ENCODE measurements at regions of chr10 and their contacts with region 1.

Region 1: DNA sequence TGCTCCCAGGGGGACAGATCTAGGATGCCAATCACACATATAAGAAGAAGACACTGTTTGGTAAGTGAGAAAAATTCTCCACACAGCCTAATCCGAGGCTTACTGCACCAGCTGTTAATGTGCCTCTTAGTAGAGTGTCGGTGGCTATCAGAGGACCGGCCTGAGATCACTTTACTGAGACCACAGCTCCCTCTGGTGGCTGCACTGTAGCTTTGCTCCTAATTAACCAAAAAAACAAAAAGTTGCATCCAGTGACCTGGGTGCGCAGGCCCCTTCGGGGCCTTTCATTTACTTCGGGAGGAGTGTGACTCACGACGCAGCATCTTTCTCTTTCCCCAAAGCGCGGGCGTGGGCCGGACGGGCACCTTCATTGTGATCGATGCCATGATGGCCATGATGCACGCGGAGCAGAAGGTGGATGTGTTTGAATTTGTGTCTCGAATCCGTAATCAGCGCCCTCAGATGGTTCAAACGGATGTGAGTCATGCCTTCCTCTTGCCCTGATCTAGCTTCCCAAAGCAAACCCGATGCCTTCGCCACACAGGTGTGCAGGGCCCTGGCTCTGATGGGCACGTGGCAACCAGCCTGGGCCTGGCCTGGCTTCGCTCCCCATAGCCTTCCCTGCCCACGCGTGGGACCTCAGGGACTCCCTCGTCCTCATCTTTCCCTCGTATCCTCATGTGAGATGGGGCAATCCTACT is 56.7 kb downstream of the MKI67 start:
- DNase-seq: peak; percentile 83
- CTCF ChIP-seq: peak; percentile 78

Region 2: GRCh38 chr10:127485153-127485857 is 584.2 kb before region 1 on chr10:
- CTCF ChIA-PET with region 1: no interaction called
- POLR2A ChIA-PET with region 1: no interaction called
- DNase-seq: no peak
- CTCF ChIP-seq: no peak

Region 3: DNA sequence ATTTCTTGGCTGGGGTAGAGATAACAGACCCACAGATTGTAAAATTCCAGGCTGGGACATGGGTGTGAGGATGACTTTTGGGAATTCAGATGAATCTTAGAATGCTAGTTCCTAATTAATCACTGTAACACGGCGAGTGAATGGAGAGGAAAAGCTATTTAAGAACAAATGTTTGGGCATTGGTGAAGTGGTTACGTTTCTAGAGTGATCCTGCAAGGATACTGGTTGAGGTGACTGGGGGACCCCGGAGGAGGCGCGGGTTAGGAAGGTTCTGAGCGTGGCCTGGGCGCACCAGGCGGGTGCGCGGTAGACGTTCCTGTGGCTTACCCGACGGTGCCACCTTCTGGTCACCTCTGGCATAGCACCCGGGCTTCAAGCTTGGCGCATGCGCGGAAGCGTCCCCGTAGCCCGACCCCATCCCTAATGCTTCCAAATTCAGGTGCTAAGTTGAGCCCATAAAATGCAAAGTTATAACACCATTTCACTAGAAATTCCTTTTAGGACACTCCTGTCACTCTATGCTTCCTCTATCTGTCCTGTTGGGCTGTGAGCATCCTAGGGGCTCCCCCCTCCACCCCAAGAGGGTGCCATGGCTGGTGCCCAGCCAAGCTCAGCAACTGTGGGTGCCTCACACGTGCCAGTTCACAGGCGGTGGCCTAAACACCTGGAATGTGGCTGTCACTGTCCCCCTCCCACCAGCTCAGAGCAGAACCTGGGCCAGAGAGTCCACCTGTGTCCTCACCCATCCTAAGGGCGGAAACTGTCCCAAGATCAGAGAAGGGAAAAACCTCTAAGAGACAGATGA is 58.1 kb before region 1 on chr10:
- CTCF ChIA-PET with region 1: interaction called, 19 read pairs
- POLR2A ChIA-PET with region 1: no interaction called
- DNase-seq: peak; percentile 92
- CTCF ChIP-seq: peak; percentile 93

Region 4: DNA sequence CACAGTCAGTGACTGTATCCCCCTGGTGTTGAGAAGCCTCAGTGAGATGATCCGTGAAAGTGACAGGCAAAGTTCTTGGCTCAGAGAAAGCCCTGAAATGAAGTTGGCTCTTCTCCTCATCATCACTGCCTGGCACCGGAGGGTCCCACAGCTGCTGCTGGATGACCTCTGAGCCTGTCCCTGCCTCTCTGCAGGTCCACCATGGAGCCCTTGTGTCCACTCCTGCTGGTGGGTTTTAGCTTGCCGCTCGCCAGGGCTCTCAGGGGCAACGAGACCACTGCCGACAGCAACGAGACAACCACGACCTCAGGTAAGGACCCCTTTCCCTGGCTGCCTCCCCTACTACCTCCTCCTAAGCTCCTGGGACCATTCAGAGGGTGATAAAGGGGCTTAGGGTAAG is 28.8 kb before region 1 on chr10:
- CTCF ChIA-PET with region 1: interaction called, 335 read pairs
- POLR2A ChIA-PET with region 1: no interaction called
- DNase-seq: no peak
- CTCF ChIP-seq: no peak

Region 5: DNA sequence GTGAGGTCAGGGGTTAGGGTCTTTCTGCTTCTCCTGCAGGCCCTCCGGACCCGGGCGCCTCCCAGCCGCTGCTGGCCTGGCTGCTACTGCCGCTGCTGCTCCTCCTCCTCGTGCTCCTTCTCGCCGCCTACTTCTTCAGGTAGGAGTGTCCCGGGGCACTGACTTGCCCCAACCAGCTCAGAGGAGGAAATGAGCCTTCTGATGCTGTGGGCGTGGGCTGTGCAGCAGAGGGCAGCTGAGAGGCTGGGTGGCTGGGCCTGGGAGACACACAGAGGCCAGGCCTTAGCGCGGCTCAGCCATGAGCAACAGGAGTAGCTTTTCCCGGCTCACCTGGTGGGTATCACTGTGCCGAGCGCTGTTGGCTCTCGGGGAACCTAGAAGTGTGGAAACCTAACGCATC is 22.1 kb before region 1 on chr10:
- CTCF ChIA-PET with region 1: interaction called, 40 read pairs
- POLR2A ChIA-PET with region 1: no interaction called
- DNase-seq: peak; percentile 91
- CTCF ChIP-seq: no peak

Region 6: DNA sequence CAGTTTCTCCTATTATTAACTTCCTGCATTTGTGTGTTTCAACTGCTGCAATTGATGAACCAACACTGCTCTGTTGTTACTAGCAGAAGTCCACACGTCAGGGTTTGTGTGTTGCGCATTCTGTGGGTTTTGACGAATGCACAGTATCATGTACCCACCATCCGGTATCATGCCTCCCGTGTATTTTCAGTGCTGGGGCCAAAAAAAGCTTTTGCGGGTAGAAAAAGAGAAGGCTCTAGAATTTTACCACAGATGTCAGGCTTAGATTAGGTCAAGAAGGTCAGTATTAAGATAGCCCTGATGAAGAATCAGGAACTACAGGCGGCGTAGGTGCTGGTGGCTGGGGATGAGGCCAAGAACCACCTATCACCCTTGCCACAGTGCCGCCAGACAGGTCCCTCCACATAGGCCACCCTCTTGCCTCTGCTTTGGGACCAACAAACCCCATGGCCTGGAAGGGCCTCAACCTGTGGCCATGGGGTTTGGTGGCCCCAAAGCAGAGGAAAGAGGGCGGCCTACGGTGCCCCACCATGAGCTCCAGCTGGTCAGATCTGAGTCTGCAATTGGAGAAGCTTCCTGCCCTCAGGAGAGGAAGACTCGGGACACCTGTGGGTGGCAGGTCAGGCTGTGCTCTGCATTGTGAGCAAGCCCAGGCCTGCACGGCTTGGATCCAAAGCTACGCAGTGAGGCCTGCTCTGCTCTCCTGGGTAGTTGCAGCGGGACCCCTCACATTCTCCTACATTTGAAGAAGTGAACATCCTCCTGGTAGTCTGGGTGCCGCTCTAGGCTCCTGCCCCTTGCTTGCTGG is 15.1 kb before region 1 on chr10:
- CTCF ChIA-PET with region 1: interaction called, 40 read pairs
- POLR2A ChIA-PET with region 1: no interaction called
- DNase-seq: no peak
- CTCF ChIP-seq: no peak

Region 7: DNA sequence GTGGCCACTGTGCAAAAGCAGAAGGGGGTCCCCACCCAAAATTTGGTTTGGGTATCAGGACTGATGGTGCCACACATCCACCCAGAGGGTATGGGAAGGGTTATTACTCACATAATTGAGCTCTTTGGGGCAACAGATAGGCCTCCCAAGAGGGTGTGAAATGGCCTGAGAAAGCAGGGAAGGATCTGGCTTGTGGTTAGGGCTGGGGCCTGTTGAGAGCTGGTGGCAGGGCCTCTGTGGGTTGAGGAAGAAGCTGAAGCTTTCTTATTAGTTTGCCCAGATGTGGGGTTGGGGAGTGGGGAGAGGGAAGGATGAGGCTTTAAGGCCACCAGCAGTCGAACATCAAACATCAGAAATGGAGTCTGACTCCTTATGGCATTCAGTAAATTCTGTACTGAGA is 75.0 kb after region 1 on chr10:
- CTCF ChIA-PET with region 1: interaction called, 70 read pairs
- POLR2A ChIA-PET with region 1: no interaction called
- DNase-seq: no peak
- CTCF ChIP-seq: no peak

Region 8: GRCh38 chr10:128150045-128150493 is 80.6 kb after region 1 on chr10:
- CTCF ChIA-PET with region 1: interaction called, 70 read pairs
- POLR2A ChIA-PET with region 1: no interaction called
- DNase-seq: peak; percentile 92
- CTCF ChIP-seq: peak; percentile 100

Measured in GM10248 (cell line).